Heart right ventricle (tissue), 16 donors: ENCODE measurements at regions of chr7 and their contacts with region 1.

Region 1: GRCh38 chr7:112092709-112093395 is 113.3 kb downstream of the DOCK4 start:
- DNase-seq: no peak
- ATAC-seq: no peak
- H3K4me3 ChIP-seq: no peak overlapping the region
- H3K27ac ChIP-seq: no peak overlapping the region
- H3K4me1 ChIP-seq: peaks cover 0 to 26% (median 3%) of the 10 kb centered on the region in 9 donors
- H3K27me3 ChIP-seq: no peaks in the 10 kb centered on the region
- CTCF ChIP-seq: no peak

Region 2: GRCh38 chr7:112182749-112183148 is 89.9 kb after region 1 on chr7:
- intact Hi-C with region 1: loop called in 1 of 10 experiments (anchors 10 kb)
- DNase-seq: peak; percentile 42 to 71
- ATAC-seq: peak; percentile 34 to 86 (median 62)
- H3K4me3 ChIP-seq: no peak overlapping the region
- H3K27ac ChIP-seq: peak overlapping the region in 3 of 10 donors; percentile 7 to 49 (median 33)
- H3K4me1 ChIP-seq: peaks cover 0 to 79% (median 60%) of the 10 kb centered on the region in 9 donors
- H3K27me3 ChIP-seq: no peaks in the 10 kb centered on the region
- CTCF ChIP-seq: no peak